Activated T-helper 1 cell treated with anti-CD3 and anti-CD28 coated beads, Interleukin-12 subunit alpha, Interleukin-12 subunit beta, Interleukin-2, Interleukin-4 antibody, amounts not matched to agents 30 ng/mL and 10 ng/mL and 1 ng/mL, durations not matched to agents 14 hours and 24 hours and 36 hours (primary cell): ENCODE measurements at regions of chr5 and their contacts with region 1.

Region 1: GRCh38 chr5:140800816-140801493 is at the start of gene PCDHA3:
- DNase-seq: no peak
- H3K4me3 Mint-ChIP-seq: no peak within 1 kb of the TSS
- H3K27ac Mint-ChIP-seq: no peak within 1 kb of the TSS
- H3K4me1 Mint-ChIP-seq: no peaks in the 10 kb centered on the region
- H3K27me3 Mint-ChIP-seq: no peaks in the 10 kb centered on the region
- total RNA-seq, gene PCDHA3: not detected in 2 replicates

Region 2: DNA sequence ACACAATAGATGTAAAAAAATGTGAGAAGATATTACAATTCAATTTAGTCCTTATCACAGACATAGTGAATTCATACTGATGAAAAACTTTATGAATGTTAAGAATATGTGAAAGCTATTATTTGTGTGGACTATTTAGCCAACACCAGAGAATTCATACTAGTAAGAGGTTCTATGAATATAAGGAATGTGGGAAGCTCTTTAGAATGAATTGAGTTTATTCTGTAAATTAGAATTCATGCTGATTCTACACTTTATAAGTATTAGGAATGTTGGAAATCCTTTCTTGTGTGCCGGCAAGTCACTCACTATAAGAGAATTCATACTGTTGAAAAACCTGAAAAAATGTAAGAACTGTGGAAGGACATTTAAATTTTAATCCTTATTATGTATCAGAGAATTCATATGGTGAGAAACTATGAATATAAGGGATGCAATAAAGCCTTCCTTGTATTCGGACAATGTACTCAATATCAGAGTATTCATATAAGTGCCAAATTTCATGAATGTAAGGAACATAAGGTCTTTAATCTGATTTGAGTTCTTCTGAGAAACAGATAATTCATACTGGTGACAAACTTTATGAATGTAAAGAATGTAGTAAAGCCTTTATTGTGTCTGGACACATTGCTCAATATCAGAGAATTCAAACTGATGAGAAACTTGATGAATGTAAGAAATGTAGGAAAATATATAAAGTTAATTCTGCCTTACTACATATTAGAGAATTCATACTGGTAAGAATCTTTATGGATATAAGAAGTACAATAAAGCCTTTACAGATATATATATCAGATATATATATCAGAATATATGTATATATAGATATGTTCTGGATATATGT is 36.6 kb before region 1 on chr5:
- intact Hi-C with region 1: no loop called
- DNase-seq: no peak
- H3K4me3 Mint-ChIP-seq: no peak overlapping the region
- H3K27ac Mint-ChIP-seq: no peak overlapping the region
- H3K4me1 Mint-ChIP-seq: no peaks in the 10 kb centered on the region
- H3K27me3 Mint-ChIP-seq: no peaks in the 10 kb centered on the region

Region 3: DNA sequence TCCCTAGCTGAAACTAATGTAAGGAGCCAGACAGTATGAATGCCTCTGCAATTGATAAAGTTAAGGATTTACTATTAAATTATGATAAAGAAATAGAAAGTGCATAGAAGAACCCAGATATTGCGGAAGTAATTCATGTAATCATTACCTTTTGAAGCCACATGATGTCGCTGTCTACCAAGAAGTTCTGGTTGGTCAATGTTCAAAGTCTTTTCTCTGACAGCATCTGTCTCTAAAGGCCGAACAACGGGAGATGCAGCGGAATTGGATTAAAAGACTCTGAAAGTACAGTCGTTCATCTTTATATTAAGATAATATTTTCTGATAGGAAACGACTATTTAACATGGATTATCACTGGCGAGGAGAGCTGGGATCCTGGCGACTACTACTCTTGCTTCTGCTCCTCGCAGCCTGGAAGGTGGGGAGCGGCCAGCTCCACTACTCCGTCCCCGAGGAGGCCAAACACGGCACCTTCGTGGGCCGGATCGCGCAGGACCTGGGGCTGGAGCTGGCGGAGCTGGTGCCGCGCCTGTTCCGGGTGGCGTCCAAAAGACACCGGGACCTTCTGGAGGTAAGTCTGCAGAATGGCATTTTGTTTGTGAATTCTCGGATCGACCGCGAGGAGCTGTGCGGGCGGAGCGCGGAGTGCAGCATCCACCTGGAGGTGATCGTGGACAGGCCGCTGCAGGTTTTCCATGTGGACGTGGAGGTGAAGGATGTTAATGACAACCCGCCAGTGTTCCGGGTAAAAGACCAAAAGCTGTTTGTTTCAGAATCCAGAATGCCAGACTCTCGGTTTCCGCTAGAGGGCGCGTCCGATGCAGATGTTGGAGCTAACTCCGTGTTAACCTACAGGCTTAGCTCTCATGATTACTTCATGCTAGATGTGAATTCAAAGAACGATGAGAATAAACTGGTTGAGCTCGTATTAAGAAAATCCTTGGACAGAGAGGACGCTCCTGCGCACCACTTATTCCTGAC is 40.3 kb after region 1 on chr5 and contains the start of gene PCDHA8:
- intact Hi-C with region 1: loop called (anchors 5 kb)
- DNase-seq: no peak
- H3K4me3 Mint-ChIP-seq: no peak within 1 kb of the TSS
- H3K27ac Mint-ChIP-seq: no peak within 1 kb of the TSS
- H3K4me1 Mint-ChIP-seq: no peaks in the 10 kb centered on the region
- H3K27me3 Mint-ChIP-seq: no peaks in the 10 kb centered on the region
- total RNA-seq, gene PCDHA8: not detected in 2 replicates

Region 4: DNA sequence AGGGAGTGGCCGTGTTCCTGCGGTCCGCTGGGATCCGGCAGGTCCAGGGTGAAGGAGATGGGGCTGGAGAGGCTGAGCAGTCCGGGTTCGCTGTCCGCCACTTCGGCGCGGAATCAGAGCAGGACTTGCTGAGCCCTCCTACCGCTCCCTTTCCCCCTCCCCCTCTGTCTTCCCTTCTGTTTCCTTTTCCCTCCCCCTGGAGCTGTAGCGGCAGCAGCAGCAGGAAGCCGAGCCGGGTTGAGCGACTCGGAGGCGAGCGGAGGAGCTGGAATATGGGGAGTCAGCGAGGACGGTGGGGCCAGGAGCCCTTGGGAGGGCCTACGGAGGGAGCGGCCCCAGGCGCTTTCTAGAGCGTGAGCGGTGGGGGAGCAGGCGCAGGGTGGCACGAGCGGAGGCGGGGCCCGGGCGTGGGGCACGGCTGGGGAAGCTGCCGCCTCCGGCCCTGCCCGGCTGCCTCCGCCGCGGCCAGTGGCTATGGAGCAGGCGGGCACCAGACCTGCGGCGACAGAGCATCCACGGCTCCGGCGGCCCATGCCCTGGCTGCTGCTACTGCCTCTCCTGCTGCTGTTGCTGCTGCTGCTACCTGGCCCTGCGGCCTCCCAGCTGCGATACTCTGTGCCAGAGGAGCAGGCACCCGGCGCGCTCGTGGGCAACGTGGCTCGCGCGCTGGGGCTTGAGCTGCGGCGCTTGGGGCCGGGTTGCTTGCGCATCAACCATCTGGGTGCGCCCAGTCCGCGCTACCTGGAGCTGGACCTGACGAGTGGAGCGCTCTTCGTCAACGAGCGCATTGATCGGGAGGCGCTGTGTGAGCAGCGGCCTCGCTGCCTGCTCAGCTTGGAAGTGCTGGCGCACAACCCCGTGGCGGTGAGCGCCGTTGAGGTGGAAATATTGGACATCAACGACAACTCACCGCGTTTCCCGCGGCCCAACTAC is 165.6 kb after region 1 on chr5 and contains the start of gene PCDHAC2:
- intact Hi-C with region 1: no loop called
- DNase-seq: no peak
- H3K4me3 Mint-ChIP-seq: no peak within 1 kb of the TSS
- H3K27ac Mint-ChIP-seq: no peak within 1 kb of the TSS
- H3K4me1 Mint-ChIP-seq: no peaks in the 10 kb centered on the region
- H3K27me3 Mint-ChIP-seq: peaks cover 18% of the 10 kb centered on the region
- total RNA-seq, gene PCDHAC2: not detected in 2 replicates